H1 (cell line): ENCODE measurements at regions of chr19 and their contacts with region 1.

Region 1: DNA sequence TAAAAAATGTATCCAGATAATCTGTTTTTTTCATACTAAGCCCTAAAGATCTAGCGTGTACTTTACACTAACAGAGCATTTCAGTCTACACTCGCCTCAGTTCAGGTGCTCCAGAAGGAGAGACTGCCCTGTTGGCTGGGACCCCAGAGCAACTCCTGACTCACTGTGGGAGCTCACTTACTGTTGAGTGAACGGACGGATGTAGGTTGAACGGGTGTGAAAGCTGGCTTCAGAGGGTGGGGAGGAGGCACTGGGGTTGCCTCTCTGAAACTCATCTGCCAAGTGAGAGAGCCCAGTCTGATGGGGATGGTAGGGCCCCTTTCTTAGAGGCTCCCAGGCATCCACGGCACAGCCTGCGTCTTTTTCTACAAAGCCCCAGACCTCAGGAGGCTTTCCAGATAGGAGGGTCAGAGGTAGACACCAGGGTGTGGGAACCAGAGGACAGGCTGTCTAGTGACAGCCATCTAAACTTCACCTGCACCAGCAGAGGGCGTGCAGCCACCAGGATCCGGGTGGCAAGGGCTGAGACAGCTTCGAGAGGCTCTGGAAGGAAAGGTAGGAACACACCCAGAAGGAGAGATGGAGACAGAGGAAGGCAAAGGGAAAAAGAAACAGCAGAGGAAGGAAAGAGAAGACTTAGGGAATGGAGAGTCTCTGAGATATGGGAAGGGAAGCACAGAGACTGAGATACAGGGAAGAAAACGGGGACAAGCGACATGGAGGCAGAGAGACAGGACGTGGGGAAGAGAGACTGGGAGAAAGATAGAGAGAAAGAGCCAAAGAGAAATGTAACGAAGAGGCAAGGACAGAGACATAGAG is 3.7 kb downstream of the KASH5 start:
- DNase-seq: peak; percentile 62 to 82
- H3K4me3 ChIP-seq: no peak overlapping the region
- H3K27ac ChIP-seq: no peak overlapping the region
- H3K4me1 ChIP-seq: peaks cover 0 to 8% (median 3%) of the 10 kb centered on the region in 4 experiments; a peak in 3 of 7 replicates
- H3K27me3 ChIP-seq: no peaks in the 10 kb centered on the region
- CTCF ChIP-seq: peak; percentile 92 to 98 (median 94)
- EP300 ChIP-seq: no peak
- POLR2A ChIP-seq: no peak
- RAD21 ChIP-seq: peak; percentile 99

Region 2: GRCh38 chr19:49374665-49375434 is 16.9 kb before region 1 on chr19:
- CTCF ChIA-PET with region 1: interaction called, 25 read pairs
- POLR2A ChIA-PET with region 1: interaction called, 3 read pairs
- DNase-seq: no peak
- H3K4me3 ChIP-seq: no peak overlapping the region
- H3K27ac ChIP-seq: no peak overlapping the region
- H3K4me1 ChIP-seq: no peaks in the 10 kb centered on the region
- H3K27me3 ChIP-seq: no peaks in the 10 kb centered on the region; a peak in 1 of 7 replicates
- CTCF ChIP-seq: no peak
- EP300 ChIP-seq: no peak
- POLR2A ChIP-seq: no peak
- RAD21 ChIP-seq: no peak

Region 3: GRCh38 chr19:49403404-49404187 is 11.8 kb after region 1 on chr19:
- CTCF ChIA-PET with region 1: interaction called, 291 read pairs
- POLR2A ChIA-PET with region 1: interaction called, 5 read pairs
- DNase-seq: peak; percentile 49 to 77
- H3K4me3 ChIP-seq: peak overlapping the region in 3 of 4 experiments; percentile 12 to 23 (median 17); a peak in 2 of 8 replicates
- H3K27ac ChIP-seq: peak overlapping the region; percentile 69
- H3K4me1 ChIP-seq: peaks cover 5 to 28% (median 12%) of the 10 kb centered on the region in 4 experiments
- H3K27me3 ChIP-seq: no peaks in the 10 kb centered on the region
- CTCF ChIP-seq: no peak
- EP300 ChIP-seq: no peak; a peak in 1 of 3 replicates
- POLR2A ChIP-seq: peak in 1 of 2 experiments; percentile 71; a peak in 2 of 3 replicates
- RAD21 ChIP-seq: no peak; a peak in 1 of 4 replicates

Region 4: DNA sequence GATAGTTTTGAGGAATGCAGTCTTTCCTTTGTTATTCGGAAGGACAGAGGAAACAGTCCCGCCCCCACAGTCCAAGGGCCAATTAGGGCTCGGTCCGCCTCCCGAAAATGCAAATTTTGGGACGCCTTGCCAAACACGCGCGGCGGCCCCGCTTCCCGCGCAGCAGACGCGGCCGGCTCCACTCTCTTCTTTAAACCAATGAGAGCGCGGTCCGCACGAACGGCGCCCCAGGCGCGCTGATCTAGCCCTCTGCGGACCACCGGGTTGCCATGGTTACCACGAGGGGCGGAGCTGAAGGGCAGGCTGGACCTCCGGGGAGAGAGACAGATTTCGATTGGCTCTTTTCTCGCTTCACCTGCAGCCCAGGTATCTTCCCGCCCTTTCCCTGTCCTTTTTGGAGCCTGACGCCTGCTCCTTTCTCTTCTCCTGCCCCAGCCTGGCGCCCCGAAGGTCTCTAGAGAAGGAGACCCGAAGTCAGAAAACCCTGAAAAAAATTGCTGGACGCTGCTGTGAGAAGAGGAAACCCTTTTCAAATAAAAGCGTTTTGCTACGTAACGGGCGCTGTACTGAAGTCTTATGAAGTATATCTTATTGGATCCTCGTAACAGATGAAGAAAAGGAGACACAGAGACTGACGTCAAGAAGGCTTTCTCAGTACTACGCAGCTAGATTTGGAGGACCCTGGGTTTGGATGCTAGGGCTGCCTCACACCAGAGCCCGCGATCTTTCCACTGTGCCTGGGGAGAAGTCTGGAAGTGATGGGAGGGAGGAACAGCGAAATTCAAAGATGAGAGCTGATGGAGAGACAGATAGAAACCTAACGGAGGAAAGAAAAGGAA is 29.5 kb after region 1 on chr19:
- CTCF ChIA-PET with region 1: interaction called, 291 read pairs
- POLR2A ChIA-PET with region 1: interaction called, 12 read pairs
- DNase-seq: peak; percentile 79 to 99
- H3K4me3 ChIP-seq: peak overlapping the region in 1 of 4 experiments; percentile 9; a peak in 1 of 8 replicates
- H3K27ac ChIP-seq: no peak overlapping the region
- H3K4me1 ChIP-seq: peaks cover 7 to 28% (median 17%) of the 10 kb centered on the region in 4 experiments
- H3K27me3 ChIP-seq: peaks cover 23 to 51% (median 46%) of the 10 kb centered on the region in 4 experiments
- CTCF ChIP-seq: no peak
- EP300 ChIP-seq: no peak
- POLR2A ChIP-seq: no peak
- RAD21 ChIP-seq: no peak

Region 5: GRCh38 chr19:49430678-49431329 is 39.0 kb after region 1 on chr19:
- CTCF ChIA-PET with region 1: interaction called, 49 read pairs
- POLR2A ChIA-PET with region 1: interaction called, 12 read pairs
- DNase-seq: no peak
- H3K4me3 ChIP-seq: no peak overlapping the region
- H3K27ac ChIP-seq: no peak overlapping the region
- H3K4me1 ChIP-seq: peaks cover 3 to 35% (median 23%) of the 10 kb centered on the region in 4 experiments
- H3K27me3 ChIP-seq: peaks cover 6 to 37% (median 33%) of the 10 kb centered on the region in 4 experiments; a peak in 6 of 7 replicates
- CTCF ChIP-seq: peak; percentile 55 to 85 (median 78)
- EP300 ChIP-seq: no peak
- POLR2A ChIP-seq: no peak
- RAD21 ChIP-seq: peak; percentile 32 to 49

Region 6: GRCh38 chr19:49436369-49437017 is 44.7 kb after region 1 on chr19:
- CTCF ChIA-PET with region 1: interaction called, 88 read pairs
- POLR2A ChIA-PET with region 1: interaction called, 7 read pairs
- DNase-seq: peak; percentile 89 to 100
- H3K4me3 ChIP-seq: peak overlapping the region; percentile 26 to 55 (median 35); a peak in 7 of 8 replicates
- H3K27ac ChIP-seq: no peak overlapping the region
- H3K4me1 ChIP-seq: peaks cover 0 to 16% (median 12%) of the 10 kb centered on the region in 4 experiments; a peak in 5 of 7 replicates
- H3K27me3 ChIP-seq: peaks cover 30 to 72% (median 62%) of the 10 kb centered on the region in 4 experiments
- CTCF ChIP-seq: no peak
- EP300 ChIP-seq: no peak
- POLR2A ChIP-seq: no peak; a peak in 1 of 3 replicates
- RAD21 ChIP-seq: no peak

Region 7: DNA sequence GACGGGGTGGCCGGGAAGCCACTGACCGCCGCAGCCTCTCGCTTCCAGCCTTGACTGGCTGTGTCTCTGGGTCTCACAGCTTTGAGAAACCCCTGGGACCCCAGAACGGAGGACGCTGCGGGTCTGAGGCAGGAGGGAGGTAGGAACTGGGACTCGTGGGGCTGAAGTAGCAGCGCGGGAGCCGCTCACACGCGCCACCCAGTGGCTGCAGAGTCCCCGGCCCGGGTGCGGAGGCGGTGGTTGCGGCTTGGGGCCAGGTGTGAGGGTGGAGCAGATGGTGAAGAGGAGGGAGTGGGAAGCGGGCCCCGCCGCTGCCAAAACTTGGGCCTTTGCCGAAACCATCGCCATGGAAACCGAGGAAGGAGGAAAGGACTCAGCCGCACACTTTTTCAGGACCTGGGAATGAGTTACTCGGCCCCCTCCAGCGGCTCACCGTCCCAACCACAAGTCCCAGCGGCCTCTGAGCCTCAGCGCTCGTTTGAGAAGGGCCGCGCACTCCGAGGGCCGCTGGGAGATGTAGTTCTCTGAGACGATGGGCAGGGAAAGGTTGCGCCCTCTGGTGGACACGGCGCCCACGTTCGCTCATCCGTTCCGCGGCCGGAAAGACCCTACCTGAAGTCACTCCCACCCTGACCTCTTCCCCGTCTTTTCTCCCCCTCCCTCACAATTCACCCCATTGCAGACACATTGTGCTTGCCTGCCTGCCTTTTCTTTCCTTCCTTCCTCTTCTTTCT is 51.7 kb after region 1 on chr19:
- CTCF ChIA-PET with region 1: interaction called, 88 read pairs
- POLR2A ChIA-PET with region 1: interaction called, 5 read pairs
- DNase-seq: peak; percentile 91 to 98
- H3K4me3 ChIP-seq: peak overlapping the region; percentile 38 to 69 (median 62)
- H3K27ac ChIP-seq: peak overlapping the region; percentile 53
- H3K4me1 ChIP-seq: peaks cover 0 to 14% (median 12%) of the 10 kb centered on the region in 4 experiments; a peak in 6 of 7 replicates
- H3K27me3 ChIP-seq: peaks cover 18 to 26% (median 25%) of the 10 kb centered on the region in 4 experiments
- CTCF ChIP-seq: peak; percentile 87 to 98 (median 89)
- EP300 ChIP-seq: no peak
- POLR2A ChIP-seq: no peak; a peak in 2 of 3 replicates
- RAD21 ChIP-seq: peak; percentile 72 to 76